Psoas muscle (tissue), 8 donors: ENCODE measurements at regions of chr11 and their contacts with region 1.

Region 1: GRCh38 chr11:1837171-1838076 is 1.4 kb upstream of the TNNI2 start:
- DNase-seq: peak; percentile 75 to 90
- ATAC-seq: peak; percentile 34 to 60 (median 48)
- H3K4me3 ChIP-seq: peak overlapping the region; percentile 28
- H3K27ac ChIP-seq: peak overlapping the region; percentile 93
- H3K4me1 ChIP-seq: peaks cover 11% of the 10 kb centered on the region
- H3K27me3 ChIP-seq: no peaks in the 10 kb centered on the region
- CTCF ChIP-seq: peak; percentile 88

Region 2: DNA sequence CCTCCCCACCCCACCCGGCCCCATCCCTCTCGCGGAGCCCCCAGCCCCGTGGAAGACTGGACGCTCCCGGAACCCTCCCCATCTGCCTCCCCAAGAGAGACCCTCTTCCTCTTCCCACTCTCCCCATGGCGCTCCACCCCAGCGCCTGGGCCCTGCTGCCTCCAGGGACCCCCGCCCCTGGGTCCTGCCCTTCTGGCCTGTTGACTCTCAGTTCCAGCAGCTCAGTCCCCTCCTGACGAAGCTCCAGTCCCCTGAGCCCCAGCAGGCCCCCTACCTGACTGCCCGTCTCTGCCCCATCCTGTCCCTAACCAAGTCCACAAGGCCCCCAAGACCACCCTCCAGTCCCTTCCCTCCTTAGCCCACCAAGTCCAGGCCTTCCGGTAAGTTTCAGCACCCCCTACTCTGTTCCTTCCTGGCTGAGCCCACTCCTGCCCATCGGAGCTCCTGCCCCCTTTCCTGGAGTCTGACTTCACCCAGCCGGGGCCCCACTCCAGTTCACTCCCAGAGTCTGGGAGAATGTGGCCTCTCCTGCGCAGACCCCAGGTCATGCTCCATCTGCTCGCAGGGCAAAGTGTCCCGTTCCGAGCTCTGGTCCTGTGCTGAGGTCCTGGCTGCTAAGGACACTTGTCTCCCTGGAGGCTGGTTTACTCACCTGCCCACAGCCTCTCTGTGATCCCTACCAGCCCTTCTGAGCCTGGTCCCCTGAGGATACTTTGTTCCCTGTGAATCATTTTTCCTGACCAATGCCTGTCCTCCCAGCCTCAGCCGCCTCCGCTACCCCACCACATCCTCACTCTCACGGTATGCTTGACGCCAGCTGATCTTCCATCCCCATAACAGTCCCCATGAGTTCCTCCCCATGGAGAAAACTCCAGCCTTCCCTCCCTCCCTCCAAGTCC is 87.8 kb before region 1 on chr11:
- intact Hi-C with region 1: loop called (anchors 2 to 10 kb)
- DNase-seq: peak in 1 of 2 donors; percentile 69
- ATAC-seq: peak in 3 of 4 donors; percentile 16 to 27 (median 25)
- H3K4me3 ChIP-seq: peak overlapping the region; percentile 67
- H3K27ac ChIP-seq: peak overlapping the region; percentile 79
- H3K4me1 ChIP-seq: peaks cover 72% of the 10 kb centered on the region
- H3K27me3 ChIP-seq: no peaks in the 10 kb centered on the region
- CTCF ChIP-seq: no peak

Region 3: DNA sequence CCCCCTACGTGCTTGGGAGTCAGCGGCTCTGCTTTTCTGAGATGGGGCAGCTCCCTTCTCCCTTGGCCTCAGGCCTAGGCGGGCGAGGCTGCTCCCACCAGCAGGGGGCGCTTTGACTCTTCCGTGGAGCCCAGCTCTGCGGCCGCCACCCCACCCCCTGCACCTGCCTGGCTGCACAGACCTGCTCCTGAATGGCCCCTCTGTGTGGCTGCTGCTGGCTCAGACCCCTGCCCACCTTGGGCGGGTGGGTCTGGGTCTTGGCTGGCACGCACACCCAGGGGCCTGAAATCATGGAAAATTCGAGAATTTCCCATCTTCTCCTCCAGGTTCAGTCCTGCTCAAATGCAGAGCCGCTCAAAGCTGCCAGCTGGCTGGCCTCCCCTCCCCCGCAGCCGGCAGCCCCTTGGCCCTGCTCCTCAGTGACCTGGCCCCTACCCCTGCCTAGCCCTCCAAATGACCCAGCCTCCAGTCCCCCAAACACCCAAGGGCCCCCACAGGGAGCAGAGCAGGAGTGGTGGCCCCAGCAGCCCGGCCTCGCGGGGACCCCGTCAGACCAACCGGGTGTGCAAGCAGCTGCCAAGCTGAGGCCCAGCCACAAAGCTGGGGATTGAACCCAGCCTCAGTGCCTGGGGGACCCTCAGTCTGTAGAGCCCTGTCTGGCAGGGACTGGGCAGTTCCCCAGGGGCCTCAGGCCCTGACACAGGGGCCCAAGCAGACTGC is 45.3 kb after region 1 on chr11:
- intact Hi-C with region 1: loop called in 1 of 2 experiments (anchors 5 kb)
- DNase-seq: peak; percentile 85 to 93
- ATAC-seq: peak; percentile 86 to 94 (median 92)
- H3K4me3 ChIP-seq: no peak overlapping the region
- H3K27ac ChIP-seq: peak overlapping the region; percentile 84
- H3K4me1 ChIP-seq: peaks cover 20% of the 10 kb centered on the region
- H3K27me3 ChIP-seq: no peaks in the 10 kb centered on the region
- CTCF ChIP-seq: peak; percentile 94